Activated CD4-positive, alpha-beta memory T cell treated with anti-CD3 and anti-CD28 coated beads for 36 hours (primary cell): ENCODE measurements at regions of chr1 and their contacts with region 1.

Region 1: GRCh38 chr1:223363856-223364684 is at the start of gene SUSD4:
- DNase-seq: peak; percentile 74
- H3K4me3 Mint-ChIP-seq: peak within 1 kb of the TSS; percentile 81
- H3K27ac Mint-ChIP-seq: no peak within 1 kb of the TSS
- H3K4me1 Mint-ChIP-seq: peaks cover 13% of the 10 kb centered on the region
- H3K27me3 Mint-ChIP-seq: peaks cover 12% of the 10 kb centered on the region
- total RNA-seq, gene SUSD4: 0.82 to 0.83 TPM

Region 2: DNA sequence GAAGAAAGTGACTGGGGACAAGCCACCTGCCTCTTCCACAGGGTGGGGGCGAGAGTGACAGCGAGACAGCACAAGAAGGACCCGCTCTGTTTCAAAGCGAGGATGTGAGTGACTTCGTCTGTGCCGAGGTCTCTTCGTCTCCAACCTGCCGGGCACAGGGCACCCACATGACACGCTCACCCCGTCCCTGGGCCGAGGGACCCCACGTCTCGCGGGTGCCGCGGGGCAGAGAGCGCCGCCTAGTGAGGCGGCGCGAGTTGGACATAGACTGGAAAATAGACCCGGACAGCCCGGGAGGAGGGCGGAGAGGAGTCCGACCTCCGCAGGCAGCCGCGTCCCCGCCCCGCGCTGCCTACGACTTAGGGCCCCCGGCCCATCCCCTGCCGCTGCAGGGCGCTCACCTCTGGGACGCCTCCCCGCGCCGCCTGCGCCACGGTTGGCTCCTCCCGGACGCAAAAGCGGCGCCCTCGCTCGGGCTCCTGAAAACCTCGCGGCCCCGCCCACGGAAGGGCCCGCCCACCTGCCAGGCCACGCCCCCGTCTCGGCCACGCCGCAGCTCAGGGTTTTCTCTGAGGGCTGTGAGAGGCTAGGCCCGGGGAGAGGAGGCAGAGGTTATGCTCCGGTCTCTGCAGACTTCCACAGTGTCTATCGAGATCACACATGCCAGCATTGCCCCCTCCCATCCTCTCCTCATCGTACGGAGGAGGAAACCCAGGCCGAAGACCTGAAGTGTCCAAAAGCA is 221.1 kb before region 1 on chr1 and contains the start of gene TLR5:
- CTCF ChIA-PET with region 1: interaction called, 3 read pairs
- POLR2A ChIA-PET with region 1: no interaction called
- intact Hi-C with region 1: loop called (anchors 1 kb)
- DNase-seq: peak; percentile 93
- H3K4me3 Mint-ChIP-seq: peak within 1 kb of the TSS; percentile 63
- H3K27ac Mint-ChIP-seq: peak within 1 kb of the TSS; percentile 9
- H3K4me1 Mint-ChIP-seq: peaks cover 19% of the 10 kb centered on the region
- H3K27me3 Mint-ChIP-seq: no peaks in the 10 kb centered on the region
- total RNA-seq, gene TLR5: 0.29 to 0.48 TPM

Region 3: DNA sequence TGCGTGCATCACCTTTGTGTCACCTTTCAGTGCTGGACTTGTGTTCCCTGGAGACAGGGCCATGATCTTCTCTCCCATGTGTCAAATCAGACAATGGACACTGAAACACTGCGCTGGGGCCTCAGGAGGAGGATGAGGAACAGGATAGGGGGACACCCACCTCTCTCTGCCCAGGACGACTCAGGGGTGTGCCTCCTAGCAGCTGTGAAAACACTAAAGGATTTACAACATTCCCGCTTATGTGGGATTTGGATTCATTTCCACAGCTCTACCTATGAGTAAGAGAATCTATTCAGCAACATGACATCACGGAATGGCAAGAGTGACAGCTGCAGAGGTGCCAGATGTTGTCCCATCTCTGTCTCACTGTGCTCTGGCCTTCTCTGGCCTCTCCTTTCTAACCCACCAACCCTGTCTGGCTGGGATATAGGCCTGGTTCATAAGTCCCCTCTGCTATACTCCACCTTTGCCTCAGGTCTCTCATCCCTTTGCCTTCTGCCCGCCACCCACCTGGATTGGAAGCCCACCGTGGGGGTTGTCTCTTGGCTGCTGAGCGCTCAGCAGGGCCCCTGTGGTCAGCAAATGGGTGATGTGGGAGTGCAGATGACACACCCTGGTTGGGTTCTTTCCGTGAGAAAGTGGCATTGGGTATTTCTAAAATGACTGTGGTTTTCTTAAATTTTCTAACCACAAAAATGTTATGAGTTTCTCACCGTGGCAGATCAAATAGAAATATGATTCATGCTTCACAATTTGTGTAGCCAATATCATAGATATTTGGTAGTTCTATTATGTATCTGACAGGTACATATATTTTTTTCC is 174.0 kb before region 1 on chr1:
- CTCF ChIA-PET with region 1: no interaction called
- POLR2A ChIA-PET with region 1: no interaction called
- intact Hi-C with region 1: no loop called
- DNase-seq: peak; percentile 79
- H3K4me3 Mint-ChIP-seq: peak overlapping the region; percentile 40
- H3K27ac Mint-ChIP-seq: peak overlapping the region; percentile 59
- H3K4me1 Mint-ChIP-seq: peaks cover 23% of the 10 kb centered on the region
- H3K27me3 Mint-ChIP-seq: peaks cover 11% of the 10 kb centered on the region

Region 4: GRCh38 chr1:223244366-223245103 is 119.5 kb before region 1 on chr1:
- CTCF ChIA-PET with region 1: no interaction called
- POLR2A ChIA-PET with region 1: no interaction called
- intact Hi-C with region 1: loop called (anchors 10 kb)
- DNase-seq: peak; percentile 52
- H3K4me3 Mint-ChIP-seq: no peak overlapping the region
- H3K27ac Mint-ChIP-seq: peak overlapping the region; percentile 59
- H3K4me1 Mint-ChIP-seq: peaks cover 31% of the 10 kb centered on the region
- H3K27me3 Mint-ChIP-seq: no peaks in the 10 kb centered on the region

Region 5: GRCh38 chr1:223298701-223299100 is 65.4 kb before region 1 on chr1:
- CTCF ChIA-PET with region 1: no interaction called
- POLR2A ChIA-PET with region 1: no interaction called
- intact Hi-C with region 1: no loop called
- DNase-seq: no peak
- H3K4me3 Mint-ChIP-seq: no peak overlapping the region
- H3K27ac Mint-ChIP-seq: no peak overlapping the region
- H3K4me1 Mint-ChIP-seq: peaks cover 14% of the 10 kb centered on the region
- H3K27me3 Mint-ChIP-seq: no peaks in the 10 kb centered on the region